Activated T-helper 1 cell treated with anti-CD3 and anti-CD28 coated beads, Interleukin-12 subunit alpha, Interleukin-12 subunit beta, Interleukin-2, Interleukin-4 antibody, amounts not matched to agents 30 ng/mL and 10 ng/mL and 1 ng/mL, durations not matched to agents 14 hours and 24 hours and 36 hours (primary cell): ENCODE measurements at regions of chr16 and their contacts with region 1.

Region 1: GRCh38 chr16:19521471-19522396 is at the start of gene GDE1:
- DNase-seq: peak; percentile 91
- H3K4me3 Mint-ChIP-seq: peak within 1 kb of the TSS; percentile 91
- H3K27ac Mint-ChIP-seq: peak within 1 kb of the TSS; percentile 91
- H3K4me1 Mint-ChIP-seq: peaks cover 56% of the 10 kb centered on the region
- H3K27me3 Mint-ChIP-seq: no peaks in the 10 kb centered on the region
- total RNA-seq, gene GDE1: 24.1 and 29.5 TPM in 2 replicates

Region 2: DNA sequence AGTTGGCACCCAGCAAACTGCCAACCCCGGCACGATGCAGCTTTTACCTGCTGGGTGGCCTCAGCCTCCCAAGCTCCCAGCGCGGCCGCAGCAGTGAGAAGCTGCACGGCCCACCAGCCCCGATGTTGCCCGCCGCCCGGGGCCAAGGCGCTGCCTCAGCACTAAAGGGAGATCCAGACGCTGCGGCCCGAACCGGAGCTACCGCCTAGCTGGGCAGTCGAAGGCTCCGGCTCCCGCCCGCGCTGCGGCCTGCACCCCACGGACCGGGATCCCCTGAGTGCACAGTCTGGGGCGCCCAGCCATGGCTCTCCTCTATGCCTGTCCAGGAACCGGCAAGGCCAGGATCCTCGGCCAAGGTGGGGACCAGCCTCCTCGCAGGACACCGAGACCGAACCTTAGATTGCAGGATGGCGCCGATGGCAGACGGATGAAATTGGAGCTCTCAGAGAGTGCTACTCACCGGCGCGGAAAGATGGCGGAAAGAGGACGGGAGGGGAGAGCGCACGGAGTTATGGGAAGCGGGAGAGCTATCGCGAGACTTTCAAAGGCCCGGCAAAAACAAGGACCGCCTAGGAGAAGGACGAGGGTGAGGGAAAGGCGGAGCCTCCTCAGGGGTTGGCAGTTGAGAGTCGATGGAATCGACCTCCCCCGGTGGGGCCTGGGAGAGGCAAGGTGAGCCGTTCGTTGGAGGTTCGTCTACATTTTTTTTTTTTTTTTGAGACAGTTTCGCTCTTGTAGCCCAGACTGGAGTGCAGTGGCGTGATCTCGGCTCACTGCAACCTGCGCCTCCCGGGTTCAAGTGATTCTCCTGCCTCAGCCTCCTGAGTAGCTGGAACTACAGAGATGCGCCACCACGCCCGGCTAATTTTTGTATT is 731.6 kb before region 1 on chr16 and contains the start of gene RPS15A:
- intact Hi-C with region 1: loop called (anchors 1 kb)
- DNase-seq: peak; percentile 92
- H3K4me3 Mint-ChIP-seq: peak within 1 kb of the TSS; percentile 95
- H3K27ac Mint-ChIP-seq: peak within 1 kb of the TSS; percentile 85
- H3K4me1 Mint-ChIP-seq: peaks cover 64% of the 10 kb centered on the region
- H3K27me3 Mint-ChIP-seq: peaks cover 1% of the 10 kb centered on the region
- total RNA-seq, gene RPS15A: 1,849 and 1,857 TPM in 2 replicates

Region 3: GRCh38 chr16:19167710-19168370 is 353.9 kb before region 1 on chr16 and contains the start of gene SYT17:
- intact Hi-C with region 1: loop called (anchors 5 kb)
- DNase-seq: peak; percentile 14
- H3K4me3 Mint-ChIP-seq: no peak within 1 kb of the TSS
- H3K27ac Mint-ChIP-seq: no peak within 1 kb of the TSS
- H3K4me1 Mint-ChIP-seq: no peaks in the 10 kb centered on the region
- H3K27me3 Mint-ChIP-seq: peaks cover 39% of the 10 kb centered on the region
- total RNA-seq, gene SYT17: 0.37 and 0.54 TPM in 2 replicates

Region 4: DNA sequence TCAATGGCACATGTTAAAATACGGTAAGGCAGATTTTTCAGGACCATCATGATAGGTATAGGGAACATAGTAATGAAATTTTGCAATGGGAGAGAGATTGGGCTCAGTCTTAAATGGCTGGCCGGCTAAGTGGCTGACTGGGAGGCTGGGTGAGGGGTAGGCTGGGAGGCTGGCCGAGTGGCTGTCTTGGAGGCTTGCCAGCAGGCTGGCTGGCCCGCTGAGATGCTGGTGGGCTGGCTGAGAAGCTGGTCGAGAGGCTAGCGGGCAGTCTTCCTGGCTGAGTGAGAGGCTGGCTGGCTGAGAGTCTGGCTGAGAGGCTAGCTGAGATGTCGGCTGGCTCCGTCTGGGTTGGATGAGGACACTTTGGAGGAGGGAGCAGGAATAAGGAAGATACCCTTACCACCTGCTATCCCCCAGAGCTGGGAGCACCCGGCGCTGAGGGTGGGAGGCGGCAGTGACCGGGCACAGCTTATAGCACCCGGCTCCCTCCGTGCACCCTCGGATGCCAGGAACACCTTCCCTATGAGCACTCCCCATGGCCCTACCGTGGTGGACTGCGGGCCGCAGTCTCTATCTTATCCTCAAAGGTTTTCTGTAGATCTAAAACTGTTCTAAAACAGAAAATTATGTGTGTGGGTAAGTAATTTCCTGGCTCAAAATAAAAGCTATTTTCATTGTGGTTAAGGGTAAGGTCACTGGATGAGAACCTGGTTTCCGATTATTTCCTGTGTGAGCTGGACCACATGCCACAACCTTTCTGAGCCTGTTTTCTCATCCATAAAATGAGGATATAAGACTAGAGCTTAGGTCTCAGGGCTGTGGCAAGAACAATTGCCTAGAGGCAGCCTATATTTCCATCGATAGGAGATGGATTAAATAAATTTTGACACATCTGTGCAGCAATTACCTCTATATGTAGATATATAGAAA is 138.6 kb before region 1 on chr16:
- intact Hi-C with region 1: loop called (anchors 5 kb)
- DNase-seq: peak; percentile 1
- H3K4me3 Mint-ChIP-seq: no peak overlapping the region
- H3K27ac Mint-ChIP-seq: no peak overlapping the region
- H3K4me1 Mint-ChIP-seq: peaks cover 37% of the 10 kb centered on the region
- H3K27me3 Mint-ChIP-seq: peaks cover 19% of the 10 kb centered on the region

Region 5: DNA sequence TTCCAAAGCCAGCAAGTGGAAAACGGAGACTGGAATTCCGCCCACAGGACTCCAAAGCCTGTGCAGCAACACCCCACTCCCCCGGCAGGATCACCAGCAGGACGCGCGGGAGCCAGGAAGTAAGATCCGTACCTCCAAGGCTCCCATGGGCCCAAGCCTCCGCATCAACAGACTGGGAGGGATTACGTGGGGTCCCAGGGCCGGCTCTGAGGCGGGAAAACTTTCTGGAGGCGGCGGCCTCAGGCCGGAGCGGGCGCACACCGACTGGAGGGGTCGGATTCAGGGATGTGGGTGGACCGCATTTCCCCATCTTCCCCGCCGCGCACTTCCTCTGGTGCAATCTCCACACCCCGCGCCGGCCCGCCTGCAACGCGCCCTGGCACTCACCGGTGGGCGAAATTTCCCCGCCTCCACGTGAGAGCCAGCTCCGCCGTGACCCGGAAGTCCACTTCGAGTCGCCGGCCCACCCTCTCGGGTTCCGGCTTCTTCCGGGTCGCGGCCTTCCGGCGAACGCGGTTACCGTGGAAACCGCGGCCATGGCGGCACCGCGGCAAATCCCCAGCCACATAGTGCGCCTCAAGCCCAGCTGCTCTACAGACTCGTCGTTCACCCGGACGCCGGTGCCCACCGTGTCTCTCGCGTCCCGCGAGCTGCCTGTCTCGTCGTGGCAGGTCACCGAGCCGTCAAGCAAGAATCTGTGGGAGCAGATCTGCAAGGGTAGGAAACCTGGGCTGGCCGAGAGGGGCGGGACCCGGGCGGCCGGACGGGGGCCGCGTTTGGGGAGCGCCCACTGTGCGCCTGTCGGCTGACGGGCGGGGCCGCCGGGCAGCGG is 196.3 kb after region 1 on chr16 and contains the starts of genes IQCK and KNOP1:
- intact Hi-C with region 1: loop called (anchors 1 kb)
- DNase-seq: peak; percentile 87
- H3K4me3 Mint-ChIP-seq: peak within 1 kb of the TSS; percentile 95
- H3K27ac Mint-ChIP-seq: peak within 1 kb of the TSS; percentile 88
- H3K4me1 Mint-ChIP-seq: peaks cover 28% of the 10 kb centered on the region
- H3K27me3 Mint-ChIP-seq: no peaks in the 10 kb centered on the region
- total RNA-seq, gene IQCK: 1.1 and 2.0 TPM in 2 replicates
- total RNA-seq, gene KNOP1: 35.3 and 36.0 TPM in 2 replicates

Region 6: DNA sequence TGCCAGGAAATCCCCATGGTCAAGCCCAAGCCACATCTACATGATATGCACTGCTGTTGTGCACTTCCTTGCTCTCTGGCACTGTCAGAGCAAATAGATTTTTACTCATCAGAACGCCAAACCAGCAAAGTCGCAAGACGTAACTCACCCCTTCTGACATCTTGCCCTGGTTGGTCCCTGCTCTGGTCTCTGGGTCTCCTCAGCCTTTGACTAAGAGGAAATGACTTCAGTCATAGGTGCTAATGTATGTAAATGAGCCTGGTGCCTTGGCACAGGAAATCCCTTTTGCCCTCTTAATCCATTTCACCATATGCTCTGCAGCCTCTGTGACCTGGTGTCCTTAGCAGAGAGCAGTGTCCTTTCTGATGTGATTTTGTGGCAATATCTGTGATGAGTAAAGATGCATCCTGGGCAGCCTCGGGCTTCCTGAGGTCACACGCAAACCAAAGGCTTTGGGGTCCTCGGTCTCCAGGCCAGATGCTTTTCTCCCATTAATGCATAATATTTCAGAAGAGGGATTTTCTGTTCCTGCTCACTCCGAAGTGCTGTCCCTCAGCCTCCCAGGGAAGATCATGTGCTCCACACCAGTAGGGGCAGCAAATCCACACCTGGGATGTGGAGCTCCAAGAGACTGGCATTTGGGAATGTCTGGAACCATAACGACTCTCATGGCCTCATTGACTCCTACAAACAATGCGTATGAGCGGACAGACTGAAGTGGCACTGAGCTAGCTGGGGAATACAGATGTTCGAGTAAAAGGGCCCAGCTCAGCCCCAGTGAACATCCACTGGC is 738.7 kb after region 1 on chr16:
- intact Hi-C with region 1: no loop called
- DNase-seq: no peak
- H3K4me3 Mint-ChIP-seq: no peak overlapping the region
- H3K27ac Mint-ChIP-seq: no peak overlapping the region
- H3K4me1 Mint-ChIP-seq: no peaks in the 10 kb centered on the region
- H3K27me3 Mint-ChIP-seq: no peaks in the 10 kb centered on the region

Region 7: DNA sequence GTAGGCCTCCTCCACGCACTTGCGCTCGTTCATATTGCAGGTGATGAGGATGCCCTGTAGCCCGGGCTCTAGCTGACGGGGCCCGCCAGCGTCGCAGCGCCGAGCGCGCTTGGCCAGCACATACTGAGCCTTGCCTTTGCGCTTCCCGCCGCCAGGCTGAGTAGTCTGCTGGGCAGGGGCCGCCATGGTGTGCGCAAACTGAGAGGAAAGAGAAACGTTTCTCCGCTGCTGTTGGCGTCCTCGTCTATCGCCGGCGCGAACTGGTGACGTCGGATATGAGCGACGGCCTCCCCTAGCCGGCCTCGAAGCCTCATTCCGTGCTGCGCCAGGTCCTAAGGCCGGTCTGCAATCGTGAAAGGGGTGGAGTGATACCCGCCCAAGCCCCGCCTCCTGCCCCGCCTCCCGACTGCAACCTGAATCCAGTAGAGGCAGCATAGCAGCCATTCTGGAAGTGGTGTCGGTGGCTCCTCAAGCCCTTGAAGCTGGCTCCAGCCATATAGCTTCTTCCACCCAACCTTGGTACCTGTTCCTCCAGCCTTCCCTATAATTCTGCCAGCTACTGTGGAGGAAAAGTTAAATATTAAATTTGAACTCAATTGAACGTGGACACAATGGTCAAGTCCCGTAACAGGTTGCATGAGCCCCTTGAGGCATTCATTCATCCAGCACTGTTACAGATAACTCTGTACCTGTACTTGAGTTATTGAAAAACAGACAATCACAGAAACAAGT is 1220.0 kb after region 1 on chr16 and contains the start of gene THUMPD1:
- intact Hi-C with region 1: loop called (anchors 1 kb)
- DNase-seq: peak; percentile 90
- H3K4me3 Mint-ChIP-seq: peak within 1 kb of the TSS; percentile 97
- H3K27ac Mint-ChIP-seq: peak within 1 kb of the TSS; percentile 95
- H3K4me1 Mint-ChIP-seq: peaks cover 11% of the 10 kb centered on the region
- H3K27me3 Mint-ChIP-seq: no peaks in the 10 kb centered on the region
- total RNA-seq, gene THUMPD1: 42.4 and 43.3 TPM in 2 replicates